Activated CD4-positive, alpha-beta memory T cell treated with anti-CD3 and anti-CD28 coated beads for 36 hours (primary cell): ENCODE measurements at regions of chr14 and their contacts with region 1.

Region 1: GRCh38 chr14:24332268-24332993 is 2.4 kb downstream of the ADCY4 start:
- DNase-seq: peak; percentile 89
- H3K4me3 Mint-ChIP-seq: peak overlapping the region; percentile 78
- H3K27ac Mint-ChIP-seq: peak overlapping the region; percentile 30
- H3K4me1 Mint-ChIP-seq: peaks cover 46% of the 10 kb centered on the region
- H3K27me3 Mint-ChIP-seq: peaks cover 21% of the 10 kb centered on the region

Region 2: DNA sequence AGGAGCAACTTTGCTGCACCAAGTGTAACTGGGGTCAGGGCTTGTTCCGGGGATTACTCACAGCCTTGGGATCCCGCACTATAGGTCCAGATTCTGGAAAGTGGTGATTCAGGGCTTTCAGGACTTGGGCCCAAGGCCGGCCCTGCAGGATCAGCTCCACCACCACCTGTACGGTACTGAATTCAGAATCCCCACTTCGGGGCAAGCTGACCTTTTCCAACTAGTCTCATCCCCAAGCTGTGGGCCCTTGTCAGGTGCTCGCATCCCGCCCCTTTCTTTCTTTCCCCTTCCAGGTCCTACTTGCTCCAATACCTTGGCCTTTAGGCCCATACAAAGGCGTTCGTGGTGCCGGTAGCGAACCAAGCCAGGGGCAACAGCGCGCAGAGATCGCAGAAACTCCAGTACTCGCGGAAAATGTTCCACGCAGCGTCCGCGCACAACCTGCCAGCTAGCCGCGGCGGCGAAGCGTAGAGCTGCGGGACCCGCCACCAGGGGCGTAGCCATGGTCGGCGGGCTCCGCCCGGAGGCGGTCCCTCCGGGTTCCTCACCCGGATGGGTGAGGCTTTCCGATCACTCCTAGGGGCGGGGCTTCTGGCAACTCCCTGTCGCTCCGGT is 90.5 kb before region 1 on chr14:
- CTCF ChIA-PET with region 1: interaction called, 15 read pairs
- POLR2A ChIA-PET with region 1: interaction called, 4 read pairs
- intact Hi-C with region 1: loop called (anchors 1 kb)
- DNase-seq: peak; percentile 94
- H3K4me3 Mint-ChIP-seq: peak overlapping the region; percentile 84
- H3K27ac Mint-ChIP-seq: peak overlapping the region; percentile 96
- H3K4me1 Mint-ChIP-seq: peaks cover 59% of the 10 kb centered on the region
- H3K27me3 Mint-ChIP-seq: no peaks in the 10 kb centered on the region

Region 3: DNA sequence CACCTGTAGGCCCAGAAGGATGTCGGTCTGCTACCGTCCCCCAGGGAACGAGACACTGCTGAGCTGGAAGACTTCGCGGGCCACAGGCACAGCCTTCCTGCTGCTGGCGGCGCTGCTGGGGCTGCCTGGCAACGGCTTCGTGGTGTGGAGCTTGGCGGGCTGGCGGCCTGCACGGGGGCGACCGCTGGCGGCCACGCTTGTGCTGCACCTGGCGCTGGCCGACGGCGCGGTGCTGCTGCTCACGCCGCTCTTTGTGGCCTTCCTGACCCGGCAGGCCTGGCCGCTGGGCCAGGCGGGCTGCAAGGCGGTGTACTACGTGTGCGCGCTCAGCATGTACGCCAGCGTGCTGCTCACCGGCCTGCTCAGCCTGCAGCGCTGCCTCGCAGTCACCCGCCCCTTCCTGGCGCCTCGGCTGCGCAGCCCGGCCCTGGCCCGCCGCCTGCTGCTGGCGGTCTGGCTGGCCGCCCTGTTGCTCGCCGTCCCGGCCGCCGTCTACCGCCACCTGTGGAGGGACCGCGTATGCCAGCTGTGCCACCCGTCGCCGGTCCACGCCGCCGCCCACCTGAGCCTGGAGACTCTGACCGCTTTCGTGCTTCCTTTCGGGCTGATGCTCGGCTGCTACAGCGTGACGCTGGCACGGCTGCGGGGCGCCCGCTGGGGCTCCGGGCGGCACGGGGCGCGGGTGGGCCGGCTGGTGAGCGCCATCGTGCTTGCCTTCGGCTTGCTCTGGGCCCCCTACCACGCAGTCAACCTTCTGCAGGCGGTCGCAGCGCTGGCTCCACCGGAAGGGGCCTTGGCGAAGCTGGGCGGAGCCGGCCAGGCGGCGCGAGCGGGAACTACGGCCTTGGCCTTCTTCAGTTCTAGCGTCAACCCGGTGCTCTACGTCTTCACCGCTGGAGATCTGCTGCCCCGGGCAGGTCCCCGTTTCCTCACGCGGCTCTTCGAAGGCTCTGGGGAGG is 21.5 kb before region 1 on chr14 and contains the start of gene LTB4R:
- CTCF ChIA-PET with region 1: interaction called, 235 read pairs
- POLR2A ChIA-PET with region 1: interaction called, 3 read pairs
- intact Hi-C with region 1: loop called (anchors 2 kb)
- DNase-seq: peak; percentile 81
- H3K4me3 Mint-ChIP-seq: peak within 1 kb of the TSS; percentile 79
- H3K27ac Mint-ChIP-seq: peak within 1 kb of the TSS; percentile 84
- H3K4me1 Mint-ChIP-seq: peaks cover 69% of the 10 kb centered on the region
- H3K27me3 Mint-ChIP-seq: no peaks in the 10 kb centered on the region
- total RNA-seq, gene LTB4R: 15.4 to 16.7 TPM

Region 4: GRCh38 chr14:24351517-24351916 is 19.1 kb after region 1 on chr14:
- CTCF ChIA-PET with region 1: interaction called, 41 read pairs
- POLR2A ChIA-PET with region 1: interaction called, 3 read pairs
- intact Hi-C with region 1: no loop called
- DNase-seq: no peak
- H3K4me3 Mint-ChIP-seq: no peak overlapping the region
- H3K27ac Mint-ChIP-seq: no peak overlapping the region
- H3K4me1 Mint-ChIP-seq: peaks cover 6% of the 10 kb centered on the region
- H3K27me3 Mint-ChIP-seq: peaks cover 33% of the 10 kb centered on the region

Region 5: DNA sequence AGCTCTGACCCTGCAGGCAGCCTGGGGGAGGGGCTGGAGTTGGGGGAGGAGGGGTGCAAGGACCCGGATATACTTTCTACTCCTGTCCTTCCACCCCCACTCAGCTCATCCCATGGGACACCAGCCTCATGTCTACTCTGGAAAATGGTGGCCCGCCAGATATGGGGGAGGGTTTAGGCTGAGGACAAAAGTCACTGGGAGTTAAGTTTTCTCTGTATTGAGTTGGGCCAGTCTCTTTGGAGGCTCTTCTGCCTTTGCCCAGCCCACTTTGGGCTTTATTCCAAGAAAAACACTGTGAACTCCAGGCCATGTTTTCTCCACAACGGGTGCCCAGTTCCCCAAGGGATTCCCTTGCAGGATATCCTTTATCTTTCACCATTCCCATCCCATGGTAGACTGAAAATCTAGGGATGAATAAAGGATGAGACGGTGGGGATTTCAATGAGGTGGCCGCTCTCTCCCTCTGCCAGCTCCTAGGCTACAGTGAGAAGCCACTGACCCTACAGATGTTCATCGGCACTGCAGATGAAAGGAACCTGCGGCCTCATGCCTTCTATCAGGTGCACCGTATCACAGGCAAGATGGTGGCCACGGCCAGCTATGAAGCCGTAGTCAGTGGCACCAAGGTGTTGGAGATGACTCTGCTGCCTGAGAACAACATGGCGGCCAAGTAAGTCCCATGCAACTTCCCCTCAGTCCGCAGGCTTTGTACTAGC is 40.4 kb after region 1 on chr14:
- CTCF ChIA-PET with region 1: interaction called, 12 read pairs
- POLR2A ChIA-PET with region 1: no interaction called
- intact Hi-C with region 1: loop called (anchors 5 kb)
- DNase-seq: no peak
- H3K4me3 Mint-ChIP-seq: no peak overlapping the region
- H3K27ac Mint-ChIP-seq: no peak overlapping the region
- H3K4me1 Mint-ChIP-seq: peaks cover 1% of the 10 kb centered on the region
- H3K27me3 Mint-ChIP-seq: peaks cover 11% of the 10 kb centered on the region

Region 6: DNA sequence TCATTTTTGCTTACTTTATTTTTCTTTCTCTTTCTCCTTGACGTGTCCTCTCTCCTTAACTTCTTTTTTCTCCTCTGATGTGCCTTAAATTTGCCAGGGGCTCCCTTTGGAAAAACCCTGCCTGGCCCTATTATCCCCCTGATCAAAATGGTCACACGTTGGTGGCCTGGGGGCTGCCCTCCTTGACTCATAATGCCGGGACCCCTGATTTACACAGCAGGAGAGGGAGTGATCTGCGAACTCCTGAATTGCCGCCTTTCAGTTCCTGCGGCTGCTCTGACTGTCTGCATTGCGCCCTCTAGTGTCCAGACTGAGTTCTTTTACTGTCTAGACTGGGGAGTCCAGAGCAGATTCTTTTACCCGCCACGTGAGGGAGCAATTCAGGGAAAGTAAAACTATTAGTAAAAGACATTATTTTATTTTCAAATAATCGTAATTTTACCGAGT is 346.4 kb after region 1 on chr14:
- CTCF ChIA-PET with region 1: no interaction called
- POLR2A ChIA-PET with region 1: no interaction called
- intact Hi-C with region 1: loop called (anchors 2 kb)
- DNase-seq: peak; percentile 81
- H3K4me3 Mint-ChIP-seq: peak overlapping the region; percentile 63
- H3K27ac Mint-ChIP-seq: peak overlapping the region; percentile 72
- H3K4me1 Mint-ChIP-seq: peaks cover 50% of the 10 kb centered on the region
- H3K27me3 Mint-ChIP-seq: no peaks in the 10 kb centered on the region